ENCODE measurements at regions of chr5 and their contacts with region 1.

Region 1: GRCh38 chr5:140647042-140647341 is 438 bp downstream of the NDUFA2 start:
- DNase-seq: no peak
- H3K4me3 Mint-ChIP-seq: peak overlapping the region; percentile 100
- H3K27ac Mint-ChIP-seq: peak overlapping the region; percentile 98
- H3K4me1 Mint-ChIP-seq: peaks cover 35% of the 10 kb centered on the region
- H3K27me3 Mint-ChIP-seq: no peaks in the 10 kb centered on the region

Region 2: GRCh38 chr5:140664359-140665119 is 17.5 kb after region 1 on chr5 and contains the start of gene WDR55:
- CTCF ChIA-PET with region 1: interaction called, 3 read pairs
- POLR2A ChIA-PET with region 1: interaction called, 29 read pairs
- intact Hi-C with region 1: loop called (anchors 1 kb)
- DNase-seq: peak; percentile 98
- H3K4me3 Mint-ChIP-seq: peak within 1 kb of the TSS; percentile 99
- H3K27ac Mint-ChIP-seq: peak within 1 kb of the TSS; percentile 94
- H3K4me1 Mint-ChIP-seq: peaks cover 27% of the 10 kb centered on the region
- H3K27me3 Mint-ChIP-seq: no peaks in the 10 kb centered on the region
- total RNA-seq, gene WDR55: 30.4 to 32.1 TPM

Region 3: DNA sequence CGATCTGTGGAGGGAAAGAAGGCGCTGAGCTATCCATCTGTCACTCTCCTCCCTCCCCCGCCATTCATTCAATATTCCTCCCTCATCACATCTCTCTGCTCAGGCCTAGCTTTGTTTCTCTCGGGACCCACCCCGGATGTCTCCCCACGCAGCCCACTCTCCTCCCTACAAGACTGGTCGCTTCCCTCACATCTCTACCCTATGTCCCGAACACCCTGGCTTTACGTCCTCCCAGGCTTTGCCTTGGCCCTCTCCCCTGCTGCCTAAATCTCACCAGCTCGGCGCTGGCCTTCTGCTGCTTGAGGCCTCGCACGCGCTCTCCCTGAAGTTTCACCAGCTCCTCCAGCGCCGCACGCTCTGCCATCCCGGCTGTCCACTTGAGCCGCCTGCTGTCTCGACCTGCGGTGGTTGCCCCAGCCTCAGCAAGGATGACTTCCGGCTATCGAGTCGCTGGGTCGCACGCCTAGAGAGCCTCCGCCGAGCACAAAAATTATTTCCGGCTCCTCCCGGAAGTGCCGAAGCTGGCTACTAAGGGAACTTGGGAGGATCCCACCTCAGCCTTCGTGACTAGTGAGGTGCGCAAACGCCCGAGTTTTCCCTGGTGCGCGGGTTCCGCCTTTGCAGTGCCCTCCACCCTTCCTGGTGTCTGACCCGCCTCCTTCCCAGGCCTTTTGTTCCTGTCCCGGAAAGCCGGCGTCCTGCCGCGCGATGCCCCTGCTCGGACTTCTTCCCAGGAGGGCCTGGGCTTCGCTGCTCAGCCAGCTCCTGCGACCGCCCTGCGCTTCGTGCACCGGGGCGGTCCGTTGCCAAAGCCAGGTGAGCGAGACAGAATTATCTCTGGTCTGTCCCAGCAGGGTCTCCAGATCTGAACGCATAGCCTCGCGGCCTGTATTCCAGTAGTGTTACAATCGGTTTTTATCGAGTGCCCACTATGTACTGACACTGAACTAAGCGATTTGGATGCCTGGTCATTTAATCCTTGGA is 44.2 kb after region 1 on chr5 and contains the starts of genes HARS1 and HARS2:
- CTCF ChIA-PET with region 1: no interaction called
- POLR2A ChIA-PET with region 1: interaction called, 15 read pairs
- intact Hi-C with region 1: loop called (anchors 1 kb)
- DNase-seq: peak; percentile 92
- H3K4me3 Mint-ChIP-seq: peak within 1 kb of the TSS; percentile 100
- H3K27ac Mint-ChIP-seq: peak within 1 kb of the TSS; percentile 99
- H3K4me1 Mint-ChIP-seq: peaks cover 40% of the 10 kb centered on the region
- H3K27me3 Mint-ChIP-seq: no peaks in the 10 kb centered on the region
- total RNA-seq, gene HARS1: 91.1 to 91.7 TPM
- total RNA-seq, gene HARS2: 26.9 to 28.9 TPM

Region 4: DNA sequence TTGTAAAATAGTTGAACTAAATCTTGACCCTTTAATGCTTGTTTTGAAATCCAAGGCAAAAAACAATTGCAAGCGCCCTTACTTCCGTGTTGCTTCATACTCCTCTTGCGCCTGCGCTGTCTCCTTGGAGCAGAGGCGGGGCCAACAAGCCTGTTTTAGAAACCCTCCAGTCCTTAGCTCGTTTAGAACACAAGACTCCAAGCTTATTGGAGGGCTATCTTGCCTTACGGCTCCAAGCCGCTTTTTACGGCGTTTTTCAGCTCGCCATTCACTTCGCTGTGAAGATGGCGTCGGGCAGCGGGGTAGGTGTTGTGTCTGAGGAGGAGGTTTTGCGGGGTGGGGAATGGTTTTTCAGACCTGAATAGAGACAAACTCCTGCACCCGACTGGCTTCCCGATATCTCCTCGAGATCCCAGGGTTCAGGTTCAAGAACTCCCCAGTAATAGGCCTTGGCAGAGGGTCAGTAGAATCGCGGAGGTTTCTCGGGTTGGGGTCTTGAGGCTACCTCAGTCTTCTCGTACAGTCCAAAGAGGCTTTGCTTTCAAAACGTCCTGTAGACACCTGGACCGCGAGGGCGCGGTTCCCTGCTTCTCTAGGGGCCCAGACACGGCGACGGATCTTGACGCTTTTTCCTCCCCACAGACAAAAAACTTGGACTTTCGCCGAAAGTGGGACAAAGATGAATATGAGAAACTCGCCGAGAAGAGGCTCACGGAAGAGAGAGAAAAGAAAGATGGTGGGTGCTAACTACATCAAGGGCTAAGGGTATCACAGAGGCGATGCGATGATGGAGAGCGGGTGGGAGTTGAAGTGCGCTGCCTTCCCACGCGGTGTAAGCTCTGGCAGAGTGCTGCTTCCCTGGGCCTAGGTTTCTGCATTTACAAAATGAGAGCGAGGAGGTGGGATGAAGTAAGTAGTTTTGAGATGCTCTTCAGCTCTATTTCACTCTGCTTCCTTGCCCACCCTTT is 53.5 kb after region 1 on chr5 and contains the start of gene ZMAT2:
- CTCF ChIA-PET with region 1: interaction called, 3 read pairs
- POLR2A ChIA-PET with region 1: interaction called, 6 read pairs
- intact Hi-C with region 1: loop called (anchors 1 kb)
- DNase-seq: peak; percentile 97
- H3K4me3 Mint-ChIP-seq: peak within 1 kb of the TSS; percentile 97
- H3K27ac Mint-ChIP-seq: peak within 1 kb of the TSS; percentile 90
- H3K4me1 Mint-ChIP-seq: peaks cover 28% of the 10 kb centered on the region
- H3K27me3 Mint-ChIP-seq: no peaks in the 10 kb centered on the region
- total RNA-seq, gene ZMAT2: 51.4 to 53.4 TPM

Measured in activated CD4-positive, alpha-beta memory T cell treated with anti-CD3 and anti-CD28 coated beads for 36 hours (primary cell).